PC-3 (cell line): ENCODE measurements at regions of chr3 and their contacts with region 1.

Region 1: DNA sequence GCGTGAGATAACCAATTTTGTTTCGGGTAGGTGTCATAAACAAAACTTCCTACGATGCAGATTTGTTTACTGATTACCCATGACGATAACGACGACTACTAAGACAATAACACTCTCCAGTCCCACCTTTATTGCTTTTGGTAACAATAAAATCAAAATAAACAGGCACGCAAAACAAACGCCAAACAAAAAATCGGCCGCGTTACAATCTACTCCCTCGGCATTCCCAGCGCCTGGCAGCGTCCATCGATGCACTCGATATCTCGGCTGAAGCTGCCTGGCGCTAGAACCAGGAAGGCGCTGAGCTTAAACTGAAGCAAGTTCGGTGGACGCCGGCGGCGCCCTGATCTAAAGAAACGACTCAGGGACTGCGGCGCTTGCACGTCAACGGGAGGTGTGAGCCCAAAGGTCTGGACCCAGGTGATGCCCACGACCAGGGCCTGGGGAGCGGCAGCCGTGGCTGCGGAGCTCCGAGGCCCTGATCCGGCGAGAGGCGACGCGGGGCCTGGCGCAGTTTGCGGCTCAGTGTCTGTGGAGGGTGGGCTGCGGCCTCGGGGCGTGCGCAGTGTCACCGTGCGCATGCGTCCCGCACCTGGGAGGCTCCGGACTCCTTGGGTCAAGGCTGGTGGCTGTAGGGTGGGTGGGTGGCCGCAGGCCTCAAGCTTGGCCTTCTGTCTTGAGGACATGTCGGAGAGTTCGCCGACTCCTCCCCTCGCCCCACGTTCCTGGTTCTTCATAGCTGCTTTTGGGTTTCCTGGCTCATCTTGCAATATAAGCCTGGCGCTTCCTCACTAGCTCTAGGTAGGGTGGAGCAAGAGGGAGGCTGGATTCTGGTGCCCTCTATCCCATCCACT is at the start of gene RSRC1:
- DNase-seq: peak; percentile 84
- ATAC-seq: peak; percentile 87
- H3K4me3 ChIP-seq: peak within 1 kb of the TSS; percentile 91
- H3K27ac ChIP-seq: peak within 1 kb of the TSS; percentile 83
- H3K4me1 ChIP-seq: peaks cover 12% of the 10 kb centered on the region
- H3K27me3 ChIP-seq: no peaks in the 10 kb centered on the region
- CTCF ChIP-seq: no peak
- total RNA-seq, gene RSRC1: 39.5 and 42.8 TPM in 2 replicates

Region 2: GRCh38 chr3:157856078-157856939 is 253.7 kb before region 1 on chr3:
- CTCF ChIA-PET with region 1: no interaction called
- POLR2A ChIA-PET with region 1: no interaction called
- intact Hi-C with region 1: no loop called
- DNase-seq: peak; percentile 84
- ATAC-seq: peak; percentile 88
- H3K4me3 ChIP-seq: no peak overlapping the region
- H3K27ac ChIP-seq: no peak overlapping the region
- H3K4me1 ChIP-seq: peaks cover 19% of the 10 kb centered on the region
- H3K27me3 ChIP-seq: no peaks in the 10 kb centered on the region
- CTCF ChIP-seq: no peak; the same call in 1 of the 2 replicates

Region 3: DNA sequence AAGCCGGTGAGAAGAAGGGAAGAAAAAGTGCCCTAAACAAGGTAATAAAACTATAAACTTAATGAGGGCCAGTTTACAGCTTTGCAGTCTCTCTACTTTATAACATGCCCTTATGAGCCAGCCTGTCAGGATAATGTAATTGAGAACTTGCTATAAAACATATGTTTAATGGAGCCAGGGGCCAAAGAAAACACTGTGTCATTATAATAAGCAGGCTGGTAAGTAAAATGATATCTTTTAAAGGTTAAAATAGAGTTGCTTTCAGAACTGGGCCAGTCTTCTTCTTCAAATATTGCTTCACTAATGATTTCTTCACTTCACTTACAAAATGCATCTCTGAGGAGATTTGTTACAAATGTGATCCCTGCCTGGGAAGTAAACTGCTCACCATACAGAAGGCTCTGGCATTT is 196.3 kb before region 1 on chr3:
- CTCF ChIA-PET with region 1: no interaction called
- POLR2A ChIA-PET with region 1: no interaction called
- intact Hi-C with region 1: loop called (anchors 2 kb)
- DNase-seq: peak; percentile 34
- ATAC-seq: peak; percentile 30
- H3K4me3 ChIP-seq: no peak overlapping the region
- H3K27ac ChIP-seq: peak overlapping the region; percentile 16; the same call in 1 of the 2 replicates
- H3K4me1 ChIP-seq: peaks cover 46% of the 10 kb centered on the region
- H3K27me3 ChIP-seq: no peaks in the 10 kb centered on the region
- CTCF ChIP-seq: no peak

Region 4: GRCh38 chr3:157938154-157938779 is 171.8 kb before region 1 on chr3:
- CTCF ChIA-PET with region 1: no interaction called
- POLR2A ChIA-PET with region 1: no interaction called
- intact Hi-C with region 1: no loop called
- DNase-seq: peak; percentile 51
- ATAC-seq: peak; percentile 84
- H3K4me3 ChIP-seq: no peak overlapping the region
- H3K27ac ChIP-seq: no peak overlapping the region
- H3K4me1 ChIP-seq: peaks cover 6% of the 10 kb centered on the region; the same call in 1 of the 2 replicates
- H3K27me3 ChIP-seq: no peaks in the 10 kb centered on the region
- CTCF ChIP-seq: no peak

Region 5: DNA sequence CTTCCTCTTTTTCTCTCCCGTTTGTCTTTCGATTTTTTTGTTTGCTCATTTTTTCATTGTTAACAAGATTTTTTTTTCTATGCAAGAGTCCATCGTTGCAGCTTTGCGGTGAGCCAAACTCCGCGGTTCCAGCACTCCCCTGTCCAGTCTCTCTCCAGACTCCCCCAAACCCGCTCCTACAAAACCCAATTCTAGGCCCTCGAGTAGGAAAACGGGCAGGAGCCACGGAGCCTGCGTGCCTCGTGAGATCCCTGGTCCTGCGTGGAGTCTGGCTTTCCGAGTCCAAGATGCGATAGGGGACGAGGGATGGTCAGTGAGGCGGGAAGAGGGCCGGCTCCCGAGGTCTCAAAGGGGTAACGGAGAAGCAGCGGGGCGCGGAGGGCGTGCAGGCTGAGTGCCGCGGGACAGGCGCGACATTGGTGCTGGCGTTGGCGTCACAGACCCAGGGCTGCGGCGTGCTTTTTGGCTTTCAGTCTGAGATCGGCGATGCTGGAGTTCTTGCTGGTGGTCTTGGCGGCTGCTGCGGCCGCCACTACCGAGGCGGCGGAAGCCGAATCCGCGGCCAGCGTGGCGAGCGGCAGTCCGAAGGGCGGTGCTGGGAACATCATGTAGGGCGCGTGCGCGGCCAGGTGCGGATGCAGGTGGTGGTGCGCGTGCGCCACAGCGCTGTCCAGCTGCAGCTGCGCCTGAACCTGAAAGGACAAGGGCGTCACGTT is 12.3 kb before region 1 on chr3:
- CTCF ChIA-PET with region 1: no interaction called
- POLR2A ChIA-PET with region 1: interaction called, 14 read pairs
- intact Hi-C with region 1: no loop called
- DNase-seq: peak; percentile 83
- ATAC-seq: peak; percentile 97
- H3K4me3 ChIP-seq: peak overlapping the region; percentile 94
- H3K27ac ChIP-seq: no peak overlapping the region
- H3K4me1 ChIP-seq: no peaks in the 10 kb centered on the region
- H3K27me3 ChIP-seq: peaks cover 4% of the 10 kb centered on the region
- CTCF ChIP-seq: no peak

Region 6: GRCh38 chr3:158127250-158128219 is 17.5 kb after region 1 on chr3:
- CTCF ChIA-PET with region 1: interaction called, 16 read pairs
- POLR2A ChIA-PET with region 1: no interaction called
- intact Hi-C with region 1: no loop called
- DNase-seq: peak; percentile 56
- ATAC-seq: no peak
- H3K4me3 ChIP-seq: no peak overlapping the region
- H3K27ac ChIP-seq: no peak overlapping the region
- H3K4me1 ChIP-seq: no peaks in the 10 kb centered on the region
- H3K27me3 ChIP-seq: no peaks in the 10 kb centered on the region
- CTCF ChIP-seq: no peak

Region 7: DNA sequence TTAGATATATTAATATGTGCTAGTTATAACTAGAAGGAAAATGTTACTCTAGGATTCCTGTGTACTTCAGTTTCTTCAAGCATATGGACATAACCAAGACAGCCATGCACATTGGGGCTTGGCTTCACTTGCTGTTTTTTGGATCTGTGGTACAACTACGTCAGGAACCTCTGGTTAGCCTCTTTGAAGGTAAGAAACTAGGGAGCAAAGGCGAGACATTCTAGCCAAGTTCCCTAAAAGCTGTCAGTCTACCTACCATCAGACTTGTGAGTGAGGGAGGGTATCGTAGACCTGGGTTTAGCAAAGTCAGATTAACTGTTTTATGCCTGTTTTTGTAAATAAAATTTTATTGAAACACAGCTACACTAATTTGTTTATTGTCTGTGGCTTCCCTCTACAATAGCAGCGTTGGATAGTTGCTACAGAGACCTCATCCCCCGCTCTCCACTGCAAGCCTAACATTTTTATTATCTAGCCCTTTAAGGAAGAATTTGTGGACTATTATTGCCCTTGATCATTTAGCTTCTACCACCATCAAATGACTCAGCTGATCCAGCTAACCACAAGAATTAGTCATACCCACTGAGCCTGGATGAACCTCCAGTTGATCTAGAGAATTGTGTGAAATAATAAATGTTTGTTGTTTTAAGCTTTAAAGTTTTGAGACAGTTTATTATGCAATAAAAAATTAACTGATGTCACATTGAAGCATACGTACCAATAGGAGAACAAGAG is 57.9 kb after region 1 on chr3:
- CTCF ChIA-PET with region 1: no interaction called
- POLR2A ChIA-PET with region 1: no interaction called
- intact Hi-C with region 1: loop called (anchors 10 kb)
- DNase-seq: peak; percentile 90
- ATAC-seq: peak; percentile 94
- H3K4me3 ChIP-seq: no peak overlapping the region
- H3K27ac ChIP-seq: peak overlapping the region; percentile 49
- H3K4me1 ChIP-seq: peaks cover 26% of the 10 kb centered on the region
- H3K27me3 ChIP-seq: no peaks in the 10 kb centered on the region
- CTCF ChIP-seq: no peak

Region 8: DNA sequence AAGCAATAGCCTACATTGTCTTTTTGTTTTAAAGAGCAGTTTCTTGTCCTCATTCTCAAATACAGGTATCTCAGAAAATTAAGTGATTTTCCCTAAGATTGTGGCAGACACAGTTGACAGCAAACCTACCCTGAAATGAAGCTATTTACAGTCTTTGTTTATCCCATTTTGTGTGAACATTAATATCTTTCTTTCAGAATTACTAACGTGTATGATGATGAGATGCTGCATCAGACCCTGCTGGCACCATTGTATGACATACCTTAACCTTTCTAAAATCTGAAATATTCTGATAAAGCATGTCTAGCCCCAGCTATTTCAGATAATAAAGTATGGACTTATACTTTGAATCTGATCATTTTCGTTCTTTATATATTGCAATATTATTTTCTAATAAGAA is 185.7 kb after region 1 on chr3:
- CTCF ChIA-PET with region 1: no interaction called
- POLR2A ChIA-PET with region 1: interaction called, 25 read pairs
- intact Hi-C with region 1: no loop called
- DNase-seq: no peak
- ATAC-seq: no peak
- H3K4me3 ChIP-seq: no peak overlapping the region
- H3K27ac ChIP-seq: no peak overlapping the region
- H3K4me1 ChIP-seq: no peaks in the 10 kb centered on the region
- H3K27me3 ChIP-seq: no peaks in the 10 kb centered on the region
- CTCF ChIP-seq: no peak

Region 9: GRCh38 chr3:158532099-158532734 is 422.2 kb after region 1 on chr3:
- CTCF ChIA-PET with region 1: no interaction called
- POLR2A ChIA-PET with region 1: interaction called, 5 read pairs
- intact Hi-C with region 1: loop called (anchors 2 kb)
- DNase-seq: peak; percentile 53
- ATAC-seq: no peak
- H3K4me3 ChIP-seq: no peak overlapping the region
- H3K27ac ChIP-seq: no peak overlapping the region
- H3K4me1 ChIP-seq: no peaks in the 10 kb centered on the region
- H3K27me3 ChIP-seq: no peaks in the 10 kb centered on the region
- CTCF ChIP-seq: peak; percentile 71